Activated T-helper 2 cell treated with anti-CD3 and anti-CD28 coated beads, Interferon-gamma antibody, Interleukin-2, Interleukin-4, amounts not matched to agents 10 μg/mL and 5 μg/mL and 100 μg/mL, durations not matched to agents 14 hours and 24 hours and 36 hours (primary cell): ENCODE measurements at regions of chr1 and their contacts with region 1.

Region 1: GRCh38 chr1:160078512-160079195 is 2.7 kb upstream of the KCNJ9 start:
- DNase-seq: peak; percentile 60
- H3K4me3 Mint-ChIP-seq: no peak overlapping the region
- H3K27ac Mint-ChIP-seq: no peak overlapping the region
- H3K4me1 Mint-ChIP-seq: peaks cover 11% of the 10 kb centered on the region
- H3K27me3 Mint-ChIP-seq: peaks cover 47% of the 10 kb centered on the region

Region 2: DNA sequence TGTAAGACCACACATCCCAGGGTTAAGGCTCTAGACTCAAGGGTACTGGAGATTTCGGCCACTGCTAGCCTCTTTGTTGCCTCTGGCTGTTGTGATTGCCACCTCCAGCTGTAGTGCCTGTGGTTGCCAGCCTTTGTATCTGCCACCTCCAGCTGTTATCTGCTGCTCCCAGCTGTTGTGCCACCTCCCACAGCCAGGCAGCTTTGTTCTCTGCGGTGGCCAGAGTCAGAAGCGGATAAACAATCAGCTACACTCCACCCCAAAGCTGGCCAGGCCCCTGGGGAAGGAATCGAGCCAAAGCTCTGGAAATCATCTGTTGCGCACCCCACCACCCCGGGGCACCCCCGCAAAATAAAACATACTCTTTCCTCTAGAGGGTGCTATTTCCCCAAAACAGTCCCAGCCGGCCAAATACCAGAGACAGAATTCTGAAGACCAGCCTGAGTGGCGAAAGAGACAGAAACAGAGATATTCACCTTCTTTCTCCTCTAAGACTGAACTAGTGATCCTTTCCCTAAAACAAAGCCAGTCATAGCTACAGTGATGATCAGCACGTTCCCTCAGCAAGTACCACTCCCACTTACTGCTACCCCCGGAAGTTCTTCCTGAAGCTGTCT is 32.1 kb before region 1 on chr1:
- intact Hi-C with region 1: loop called (anchors 1 kb)
- DNase-seq: peak; percentile 26
- H3K4me3 Mint-ChIP-seq: peak overlapping the region; percentile 41
- H3K27ac Mint-ChIP-seq: peak overlapping the region; percentile 43
- H3K4me1 Mint-ChIP-seq: peaks cover 12% of the 10 kb centered on the region
- H3K27me3 Mint-ChIP-seq: peaks cover 17% of the 10 kb centered on the region